H1 (cell line): ENCODE measurements at regions of chr15 and their contacts with region 1.

Region 1: GRCh38 chr15:57861036-57861638 is 154.6 kb downstream of the POLR2M start:
- DNase-seq: no peak
- H3K4me3 ChIP-seq: no peak overlapping the region
- H3K27ac ChIP-seq: no peak overlapping the region
- H3K4me1 ChIP-seq: no peaks in the 10 kb centered on the region
- H3K27me3 ChIP-seq: no peaks in the 10 kb centered on the region
- CTCF ChIP-seq: peak in 2 of 3 experiments; percentile 64 to 66; a peak in 3 of 4 replicates
- EP300 ChIP-seq: no peak
- POLR2A ChIP-seq: no peak
- RAD21 ChIP-seq: peak; percentile 65 to 72

Region 2: GRCh38 chr15:57382215-57382614 is 478.9 kb before region 1 on chr15:
- CTCF ChIA-PET with region 1: no interaction called
- POLR2A ChIA-PET with region 1: no interaction called
- DNase-seq: no peak
- H3K4me3 ChIP-seq: no peak overlapping the region
- H3K27ac ChIP-seq: no peak overlapping the region
- H3K4me1 ChIP-seq: peaks cover 17 to 42% (median 31%) of the 10 kb centered on the region in 4 experiments
- H3K27me3 ChIP-seq: peaks cover 0 to 2% (median under 1%) of the 10 kb centered on the region in 4 experiments; a peak in 1 of 7 replicates
- CTCF ChIP-seq: no peak
- EP300 ChIP-seq: no peak
- POLR2A ChIP-seq: no peak
- RAD21 ChIP-seq: no peak

Region 3: DNA sequence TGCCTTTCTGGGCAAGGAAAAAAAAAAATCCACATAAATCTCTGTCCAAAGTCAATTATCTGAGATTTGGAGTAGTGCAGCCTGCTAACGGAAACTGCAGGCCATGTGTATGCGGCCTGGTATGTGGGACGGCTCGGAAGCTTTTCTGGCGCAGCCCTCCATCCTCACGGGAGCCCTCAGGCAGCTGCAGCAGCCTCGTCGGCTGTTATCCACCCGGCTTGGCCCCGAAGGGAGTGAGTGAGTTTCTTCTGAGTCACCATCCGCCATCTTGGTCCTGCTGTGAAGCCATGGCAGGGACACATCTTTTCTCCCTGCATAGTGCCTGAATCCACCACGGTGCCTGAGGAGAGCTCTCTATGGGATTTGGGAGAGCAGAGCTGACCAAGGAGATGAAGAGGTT is 91.9 kb before region 1 on chr15:
- CTCF ChIA-PET with region 1: interaction called, 43 read pairs
- POLR2A ChIA-PET with region 1: no interaction called
- DNase-seq: no peak
- H3K4me3 ChIP-seq: no peak overlapping the region
- H3K27ac ChIP-seq: no peak overlapping the region
- H3K4me1 ChIP-seq: peaks cover 0 to 7% (median 4%) of the 10 kb centered on the region in 4 experiments; a peak in 3 of 7 replicates
- H3K27me3 ChIP-seq: no peaks in the 10 kb centered on the region
- CTCF ChIP-seq: no peak
- EP300 ChIP-seq: no peak
- POLR2A ChIP-seq: no peak
- RAD21 ChIP-seq: no peak

Region 4: GRCh38 chr15:57777003-57777402 is 84.1 kb before region 1 on chr15:
- CTCF ChIA-PET with region 1: interaction called, 13 read pairs
- POLR2A ChIA-PET with region 1: no interaction called
- DNase-seq: no peak
- H3K4me3 ChIP-seq: no peak overlapping the region
- H3K27ac ChIP-seq: no peak overlapping the region
- H3K4me1 ChIP-seq: peaks cover 0 to 6% (median 5%) of the 10 kb centered on the region in 4 experiments; a peak in 3 of 7 replicates
- H3K27me3 ChIP-seq: no peaks in the 10 kb centered on the region
- CTCF ChIP-seq: no peak
- EP300 ChIP-seq: no peak
- POLR2A ChIP-seq: no peak
- RAD21 ChIP-seq: no peak

Region 5: GRCh38 chr15:57849317-57849716 is 11.8 kb before region 1 on chr15:
- CTCF ChIA-PET with region 1: interaction called, 42 read pairs
- POLR2A ChIA-PET with region 1: no interaction called
- DNase-seq: no peak
- H3K4me3 ChIP-seq: no peak overlapping the region
- H3K27ac ChIP-seq: no peak overlapping the region
- H3K4me1 ChIP-seq: no peaks in the 10 kb centered on the region
- H3K27me3 ChIP-seq: no peaks in the 10 kb centered on the region
- CTCF ChIP-seq: no peak
- EP300 ChIP-seq: no peak
- POLR2A ChIP-seq: no peak
- RAD21 ChIP-seq: no peak

Region 6: GRCh38 chr15:57873564-57874209 is 12.6 kb after region 1 on chr15:
- CTCF ChIA-PET with region 1: interaction called, 40 read pairs
- POLR2A ChIA-PET with region 1: no interaction called
- DNase-seq: no peak
- H3K4me3 ChIP-seq: no peak overlapping the region
- H3K27ac ChIP-seq: no peak overlapping the region
- H3K4me1 ChIP-seq: no peaks in the 10 kb centered on the region
- H3K27me3 ChIP-seq: no peaks in the 10 kb centered on the region; a peak in 1 of 7 replicates
- CTCF ChIP-seq: no peak
- EP300 ChIP-seq: no peak
- POLR2A ChIP-seq: no peak
- RAD21 ChIP-seq: no peak

Region 7: GRCh38 chr15:58203537-58203936 is 342.4 kb after region 1 on chr15:
- CTCF ChIA-PET with region 1: no interaction called
- POLR2A ChIA-PET with region 1: no interaction called
- DNase-seq: no peak
- H3K4me3 ChIP-seq: no peak overlapping the region
- H3K27ac ChIP-seq: no peak overlapping the region
- H3K4me1 ChIP-seq: no peaks in the 10 kb centered on the region
- H3K27me3 ChIP-seq: no peaks in the 10 kb centered on the region
- CTCF ChIP-seq: no peak
- EP300 ChIP-seq: no peak
- POLR2A ChIP-seq: no peak
- RAD21 ChIP-seq: no peak